Left colon (tissue), 2 donors: ENCODE measurements at regions of chr12 and their contacts with region 1.

Region 1: DNA sequence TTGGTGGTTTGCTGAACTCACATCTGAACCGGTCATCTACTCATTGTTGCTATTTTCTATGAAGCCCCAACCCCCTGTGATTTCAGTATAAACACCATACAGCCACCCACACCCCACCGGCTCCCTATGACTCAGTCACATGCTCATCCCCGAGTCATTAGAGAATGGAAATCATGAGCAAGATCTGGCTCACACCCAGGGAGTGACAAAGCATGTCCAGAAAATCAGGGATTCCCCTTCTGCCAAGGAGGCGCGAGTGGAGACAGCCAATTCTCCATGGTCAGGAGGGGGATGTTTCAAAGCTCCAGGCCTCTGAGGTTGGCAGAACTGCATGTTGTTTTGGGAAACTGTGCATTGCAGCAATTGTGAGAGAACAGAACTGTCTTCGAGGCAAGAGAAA is 657.5 kb upstream of the TBX3 start:
- DNase-seq: peak; percentile 34 to 65
- ATAC-seq: no peak

Region 2: GRCh38 chr12:114684098-114684869 is 657.2 kb before region 1 on chr12 and contains the start of gene TBX3:
- intact Hi-C with region 1: loop called in 1 of 2 experiments (anchors 5 kb)
- DNase-seq: peak; percentile 95
- ATAC-seq: peak; percentile 84
- total RNA-seq, gene TBX3: 5.6 to 10.6 TPM

Region 3: DNA sequence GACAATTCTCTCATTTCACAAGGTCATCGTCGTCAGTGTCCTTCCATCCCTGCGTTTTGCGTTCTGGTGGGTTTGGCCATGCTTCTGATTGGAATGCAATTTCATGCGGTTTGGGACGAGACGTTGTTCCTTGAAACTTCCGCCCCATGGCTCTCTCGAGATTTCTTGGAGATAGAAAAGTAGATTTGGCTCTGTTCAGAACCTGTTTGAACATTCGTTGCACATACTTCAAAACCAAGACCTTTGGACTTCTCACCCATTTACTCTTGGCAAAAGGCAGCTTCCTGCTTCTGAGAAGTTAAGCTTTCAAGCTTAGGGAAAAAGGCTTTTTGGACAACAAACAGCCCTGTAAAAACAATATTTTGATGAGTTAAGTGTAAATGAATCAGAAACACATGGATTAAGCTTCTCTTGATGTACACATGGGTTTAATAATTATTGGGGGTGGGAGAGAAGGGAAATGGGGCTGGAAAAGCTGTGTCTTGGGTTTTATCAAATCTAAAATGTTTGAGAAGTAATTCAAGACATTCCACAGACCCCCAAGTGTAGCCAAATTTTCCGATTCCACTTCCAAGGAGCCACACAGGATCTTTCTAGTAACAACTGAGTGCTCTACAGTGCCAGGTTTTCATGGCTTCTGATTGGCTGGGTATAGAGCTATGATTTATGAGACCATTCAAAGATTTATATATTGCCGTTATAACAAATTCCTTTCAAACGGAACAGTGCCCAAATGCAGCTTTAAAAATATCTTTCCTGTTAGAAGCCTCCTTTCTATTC is 468.9 kb after region 1 on chr12:
- intact Hi-C with region 1: no loop called
- DNase-seq: peak in 1 of 2 donors; percentile 16
- ATAC-seq: peak; percentile 82